Caco-2 (cell line): ENCODE measurements at regions of chr17 and their contacts with region 1.

Region 1: DNA sequence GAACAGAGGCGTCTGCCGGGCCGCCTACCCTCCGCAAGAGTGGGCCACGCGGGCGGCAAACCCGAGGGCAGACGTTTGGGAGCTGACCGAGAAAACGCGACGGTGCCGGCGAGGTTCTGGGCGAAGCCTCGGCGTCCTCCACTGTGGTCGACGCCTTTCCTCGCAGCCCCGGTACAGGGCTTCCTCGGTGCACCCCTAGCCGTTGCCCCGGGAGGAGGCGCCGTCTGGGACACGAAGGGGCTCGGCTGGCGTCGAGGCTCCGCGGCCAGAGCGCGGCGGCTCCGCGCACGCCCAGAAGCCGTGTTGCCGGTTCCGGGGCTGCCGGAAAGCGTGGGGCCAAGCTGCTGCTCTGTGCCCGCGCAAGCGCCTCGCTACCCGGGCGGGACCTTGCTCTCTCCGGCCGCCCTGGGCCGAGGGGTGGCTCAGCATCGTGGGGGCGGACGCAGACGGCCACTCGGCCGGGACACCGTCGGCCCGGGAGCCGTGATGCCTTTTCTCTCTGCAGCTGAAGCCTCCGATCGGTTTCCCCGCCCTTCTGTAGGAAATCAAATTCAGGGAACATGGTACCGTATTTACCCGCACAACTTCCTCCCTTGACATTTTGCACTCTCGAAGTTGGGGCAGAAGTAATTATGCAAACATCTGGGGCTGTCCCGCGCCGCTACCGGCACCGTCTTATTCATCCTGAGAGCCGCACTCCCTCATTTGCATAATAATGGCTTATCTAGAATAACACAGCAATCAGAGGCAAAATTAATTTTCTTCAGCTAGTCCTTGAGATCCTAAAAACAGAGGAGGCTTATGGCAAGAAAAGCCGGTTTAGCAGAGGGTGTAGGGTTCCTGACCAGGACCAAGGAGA is 7.3 kb upstream of the CBX8 start:
- DNase-seq: peak; percentile 71 to 80
- H3K4me3 ChIP-seq: peak overlapping the region; percentile 61
- H3K4me3 Mint-ChIP-seq: peak overlapping the region; percentile 84
- H3K27ac Mint-ChIP-seq: peak overlapping the region; percentile 51
- H3K4me1 ChIP-seq: peaks cover 28% of the 10 kb centered on the region
- H3K4me1 Mint-ChIP-seq: peaks cover 22% of the 10 kb centered on the region
- H3K27me3 ChIP-seq: no peaks in the 10 kb centered on the region
- H3K27me3 Mint-ChIP-seq: no peaks in the 10 kb centered on the region
- CTCF ChIP-seq: no peak

Region 2: GRCh38 chr17:78390241-78391050 is 1413.8 kb before region 1 on chr17:
- CTCF ChIA-PET with region 1: no interaction called
- POLR2A ChIA-PET with region 1: interaction called, 11 read pairs
- intact Hi-C with region 1: no loop called
- DNase-seq: peak; percentile 61 to 63
- H3K4me3 ChIP-seq: no peak overlapping the region
- H3K4me3 Mint-ChIP-seq: no peak overlapping the region
- H3K27ac Mint-ChIP-seq: peak overlapping the region; percentile 85
- H3K4me1 ChIP-seq: peaks cover 47% of the 10 kb centered on the region
- H3K4me1 Mint-ChIP-seq: peaks cover 30% of the 10 kb centered on the region
- H3K27me3 ChIP-seq: no peaks in the 10 kb centered on the region
- H3K27me3 Mint-ChIP-seq: no peaks in the 10 kb centered on the region
- CTCF ChIP-seq: peak in 1 of 2 experiments; percentile 37

Region 3: GRCh38 chr17:79053251-79053925 is 750.8 kb before region 1 on chr17:
- CTCF ChIA-PET with region 1: no interaction called
- POLR2A ChIA-PET with region 1: no interaction called
- intact Hi-C with region 1: no loop called
- DNase-seq: no peak
- H3K4me3 ChIP-seq: no peak overlapping the region
- H3K4me3 Mint-ChIP-seq: no peak overlapping the region
- H3K27ac Mint-ChIP-seq: no peak overlapping the region
- H3K4me1 ChIP-seq: no peaks in the 10 kb centered on the region
- H3K4me1 Mint-ChIP-seq: no peaks in the 10 kb centered on the region
- H3K27me3 ChIP-seq: no peaks in the 10 kb centered on the region
- H3K27me3 Mint-ChIP-seq: no peaks in the 10 kb centered on the region
- CTCF ChIP-seq: no peak

Region 4: DNA sequence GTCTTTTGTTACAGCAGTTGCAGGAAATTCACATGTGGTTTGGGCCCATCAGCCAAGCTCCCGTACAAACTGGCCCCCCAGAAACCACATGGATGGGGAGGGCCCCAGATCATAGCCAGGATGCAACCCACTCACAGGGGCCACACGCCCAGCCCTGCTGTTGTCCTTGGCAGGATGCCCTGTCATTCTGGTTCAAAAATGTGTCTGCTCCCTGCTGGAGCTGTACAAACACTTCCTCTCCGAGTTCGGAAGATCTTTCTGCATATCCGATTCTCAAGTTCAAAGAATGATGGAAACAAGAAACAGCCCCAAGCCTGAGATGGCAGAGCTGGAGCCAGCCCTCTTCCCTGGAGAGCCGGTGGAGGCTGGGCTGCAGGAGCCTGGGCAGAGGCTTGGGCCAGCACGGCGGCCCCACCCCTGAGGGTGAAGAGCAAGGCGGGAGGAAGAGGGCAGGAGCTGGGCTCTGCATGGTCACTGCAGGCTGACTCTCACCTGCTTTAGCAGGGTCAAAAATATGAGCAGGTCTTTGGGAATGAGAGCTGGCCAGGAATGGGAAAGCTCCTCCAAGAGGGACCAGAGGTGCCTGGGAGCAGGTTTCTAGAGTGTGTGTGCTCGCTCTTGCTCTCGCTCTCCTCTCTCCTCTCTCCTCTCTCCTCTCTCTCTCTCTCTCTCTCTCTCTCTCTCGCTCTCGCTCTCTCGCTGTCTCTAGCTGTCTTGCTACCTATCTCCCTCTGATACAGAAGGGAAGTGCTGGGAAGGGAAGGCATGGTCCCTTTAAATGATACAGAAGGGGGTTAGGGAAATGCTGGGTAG is 108.2 kb before region 1 on chr17:
- CTCF ChIA-PET with region 1: no interaction called
- POLR2A ChIA-PET with region 1: no interaction called
- intact Hi-C with region 1: no loop called
- DNase-seq: no peak
- H3K4me3 ChIP-seq: no peak overlapping the region
- H3K4me3 Mint-ChIP-seq: no peak overlapping the region
- H3K27ac Mint-ChIP-seq: no peak overlapping the region
- H3K4me1 ChIP-seq: no peaks in the 10 kb centered on the region
- H3K4me1 Mint-ChIP-seq: no peaks in the 10 kb centered on the region
- H3K27me3 ChIP-seq: no peaks in the 10 kb centered on the region; the same call in 1 of the 2 replicates
- H3K27me3 Mint-ChIP-seq: no peaks in the 10 kb centered on the region
- CTCF ChIP-seq: no peak

Region 5: GRCh38 chr17:79771276-79771675 is 33.0 kb before region 1 on chr17:
- CTCF ChIA-PET with region 1: no interaction called
- POLR2A ChIA-PET with region 1: no interaction called
- intact Hi-C with region 1: no loop called
- DNase-seq: no peak
- H3K4me3 ChIP-seq: no peak overlapping the region
- H3K4me3 Mint-ChIP-seq: no peak overlapping the region
- H3K27ac Mint-ChIP-seq: no peak overlapping the region
- H3K4me1 ChIP-seq: peaks cover 5% of the 10 kb centered on the region
- H3K4me1 Mint-ChIP-seq: peaks cover 9% of the 10 kb centered on the region
- H3K27me3 ChIP-seq: no peaks in the 10 kb centered on the region
- H3K27me3 Mint-ChIP-seq: no peaks in the 10 kb centered on the region
- CTCF ChIP-seq: no peak

Region 6: GRCh38 chr17:79789534-79790353 is 14.5 kb before region 1 on chr17:
- CTCF ChIA-PET with region 1: no interaction called
- POLR2A ChIA-PET with region 1: no interaction called
- intact Hi-C with region 1: no loop called
- DNase-seq: no peak
- H3K4me3 ChIP-seq: no peak overlapping the region
- H3K4me3 Mint-ChIP-seq: no peak overlapping the region
- H3K27ac Mint-ChIP-seq: no peak overlapping the region
- H3K4me1 ChIP-seq: no peaks in the 10 kb centered on the region; the same call in 1 of the 2 replicates
- H3K4me1 Mint-ChIP-seq: no peaks in the 10 kb centered on the region
- H3K27me3 ChIP-seq: no peaks in the 10 kb centered on the region
- H3K27me3 Mint-ChIP-seq: no peaks in the 10 kb centered on the region
- CTCF ChIP-seq: peak in 1 of 2 experiments; percentile 16